Left ventricle myocardium superior (tissue), 1 donor: ENCODE measurements at regions of chr9 and their contacts with region 1.

Region 1: GRCh38 chr9:132250324-132251262 is 88.7 kb downstream of the NTNG2 start:
- DNase-seq: no peak
- ATAC-seq: no peak

Region 2: GRCh38 chr9:131762356-131762932 is 488.1 kb before region 1 on chr9:
- intact Hi-C with region 1: loop called (anchors 10 kb)
- DNase-seq: peak; percentile 85
- ATAC-seq: peak; percentile 95